ENCODE measurements at regions of chr12 and their contacts with region 1.

Region 1: GRCh38 chr12:122471324-122472226 is 29.2 kb downstream of the ZCCHC8 start:
- DNase-seq: no peak
- ATAC-seq: peak; percentile 76 to 85
- H3K4me3 ChIP-seq: no peak overlapping the region
- H3K27ac ChIP-seq: peak overlapping the region; percentile 70
- H3K4me1 ChIP-seq: peaks cover 5% of the 10 kb centered on the region
- H3K27me3 ChIP-seq: no peaks in the 10 kb centered on the region
- CTCF ChIP-seq: peak; percentile 79

Region 2: DNA sequence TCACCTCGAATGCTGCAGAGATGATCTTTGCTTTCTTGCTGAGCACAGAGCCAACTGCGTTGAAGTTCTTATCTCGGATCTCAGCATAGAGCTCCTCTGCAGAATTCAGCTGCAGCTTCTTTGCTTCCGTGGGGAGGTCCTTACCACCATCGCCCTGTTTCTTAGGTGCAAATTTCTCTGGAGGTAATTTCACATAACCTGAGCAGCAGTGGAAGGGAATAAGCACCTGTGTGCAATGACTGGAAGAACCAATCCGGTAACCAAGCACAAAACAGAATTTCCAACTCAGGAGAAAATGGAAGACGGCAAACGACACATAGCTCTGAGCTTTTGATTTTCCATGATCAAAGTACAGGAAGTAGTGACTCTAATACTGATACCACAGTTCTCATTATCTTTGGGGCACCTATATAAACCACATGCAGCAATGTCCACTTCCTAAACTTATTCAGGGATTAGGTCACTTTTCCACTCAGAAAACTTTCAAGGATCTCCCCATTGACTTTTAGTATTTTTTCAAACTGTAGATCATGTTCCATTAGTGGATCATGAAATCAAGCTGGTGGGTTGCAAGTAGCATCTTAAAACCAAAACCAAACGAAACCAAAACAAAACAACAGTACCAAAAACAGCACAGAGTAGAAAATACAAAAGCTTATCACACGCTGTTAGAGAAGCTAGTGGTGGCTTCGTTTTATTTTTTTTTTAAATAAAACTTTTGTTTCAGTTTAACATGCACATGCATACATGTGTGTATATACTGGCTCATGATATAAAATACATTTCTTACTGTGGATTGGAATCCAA is 226.8 kb before region 1 on chr12:
- intact Hi-C with region 1: no loop called
- DNase-seq: no peak
- ATAC-seq: no peak
- H3K4me3 ChIP-seq: peak overlapping the region; percentile 3
- H3K27ac ChIP-seq: peak overlapping the region; percentile 16
- H3K4me1 ChIP-seq: no peaks in the 10 kb centered on the region
- H3K27me3 ChIP-seq: no peaks in the 10 kb centered on the region
- CTCF ChIP-seq: no peak

Region 3: DNA sequence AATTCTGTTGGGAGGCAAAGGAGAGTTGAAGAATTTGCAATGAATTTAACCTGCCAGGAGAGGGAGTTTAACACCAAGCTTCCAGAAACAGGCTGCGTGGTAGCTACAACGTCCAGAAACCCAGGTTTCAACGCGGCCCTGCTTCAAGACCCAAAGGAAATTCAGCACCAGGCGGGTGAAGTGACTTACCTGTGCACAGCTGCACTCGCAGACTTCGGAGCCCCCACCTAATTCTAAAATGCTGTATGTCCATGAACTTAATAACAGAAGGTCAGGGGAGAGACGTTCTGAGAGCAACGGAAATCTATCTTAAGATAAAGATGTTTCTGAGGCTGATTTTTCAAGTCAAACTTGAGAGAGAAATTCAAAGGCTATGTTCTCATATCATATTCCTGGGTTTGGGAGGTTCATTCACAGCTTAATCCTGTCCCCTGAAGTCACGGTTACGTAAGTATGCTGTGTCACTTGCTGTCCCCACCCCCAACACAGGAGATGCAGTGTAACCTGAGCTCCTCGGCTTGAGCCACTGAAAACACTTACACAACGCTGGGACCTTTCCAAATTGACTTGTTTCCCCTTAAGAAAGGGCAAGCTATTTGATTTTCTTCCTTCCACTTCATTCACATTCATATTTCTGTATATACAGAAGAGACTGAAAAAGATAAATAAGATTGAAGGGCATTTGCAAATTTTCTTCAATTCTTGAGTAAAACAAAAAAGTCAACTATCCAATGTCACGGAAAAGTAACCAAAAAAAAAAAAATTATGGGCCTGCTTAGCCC is 71.8 kb before region 1 on chr12:
- intact Hi-C with region 1: loop called (anchors 5 kb)
- DNase-seq: peak; percentile 77
- ATAC-seq: peak; percentile 95
- H3K4me3 ChIP-seq: peak overlapping the region; percentile 27
- H3K27ac ChIP-seq: peak overlapping the region; percentile 88
- H3K4me1 ChIP-seq: peaks cover 33% of the 10 kb centered on the region
- H3K27me3 ChIP-seq: no peaks in the 10 kb centered on the region
- CTCF ChIP-seq: peak; percentile 70

Region 4: GRCh38 chr12:122752464-122753318 is 281.1 kb after region 1 on chr12 and contains the start of gene DENR:
- intact Hi-C with region 1: no loop called
- DNase-seq: peak; percentile 98
- ATAC-seq: peak; percentile 99
- H3K4me3 ChIP-seq: peak within 1 kb of the TSS; percentile 71
- H3K27ac ChIP-seq: peak within 1 kb of the TSS; percentile 87
- H3K4me1 ChIP-seq: peaks cover 19% of the 10 kb centered on the region
- H3K27me3 ChIP-seq: no peaks in the 10 kb centered on the region
- CTCF ChIP-seq: peak; percentile 87
- total RNA-seq, gene DENR: 30.9 TPM

Measured in lower lobe of right lung (tissue), 2 donors.